Naive thymus-derived CD4-positive, alpha-beta T cell (primary cell): ENCODE measurements at regions of chr14 and their contacts with region 1.

Region 1: DNA sequence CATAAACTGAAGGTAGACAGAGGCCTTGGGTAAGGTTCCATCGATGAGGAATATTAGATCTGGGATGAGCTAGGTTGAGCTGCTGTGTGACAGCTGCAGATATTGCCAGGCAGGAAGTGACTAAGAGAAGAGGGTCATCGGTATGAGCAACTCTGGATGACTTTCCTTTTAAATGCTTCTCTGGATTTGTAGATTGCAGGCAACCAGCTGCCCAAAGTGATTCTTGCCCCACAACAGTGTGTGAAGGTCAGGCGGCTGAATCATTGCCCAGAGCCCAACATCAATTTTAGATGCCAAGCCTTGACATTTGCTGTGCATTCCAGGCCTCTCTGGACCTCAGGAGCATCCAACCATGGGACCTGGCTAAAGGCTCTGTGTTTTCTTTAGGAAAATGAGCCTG is 255.9 kb downstream of the DPF3 start:
- DNase-seq: no peak
- ATAC-seq: no peak
- H3K4me3 ChIP-seq: no peak overlapping the region
- H3K4me3 Mint-ChIP-seq: no peak overlapping the region
- H3K27ac ChIP-seq: no peak overlapping the region
- H3K27ac Mint-ChIP-seq: no peak overlapping the region
- H3K4me1 ChIP-seq: no peaks in the 10 kb centered on the region
- H3K4me1 Mint-ChIP-seq: peaks cover 0 to 6% (median 0%) of the 10 kb centered on the region in 7 donors
- H3K27me3 ChIP-seq: no peaks in the 10 kb centered on the region
- H3K27me3 Mint-ChIP-seq: peaks cover 0 to 40% (median 0%) of the 10 kb centered on the region in 5 donors

Region 2: DNA sequence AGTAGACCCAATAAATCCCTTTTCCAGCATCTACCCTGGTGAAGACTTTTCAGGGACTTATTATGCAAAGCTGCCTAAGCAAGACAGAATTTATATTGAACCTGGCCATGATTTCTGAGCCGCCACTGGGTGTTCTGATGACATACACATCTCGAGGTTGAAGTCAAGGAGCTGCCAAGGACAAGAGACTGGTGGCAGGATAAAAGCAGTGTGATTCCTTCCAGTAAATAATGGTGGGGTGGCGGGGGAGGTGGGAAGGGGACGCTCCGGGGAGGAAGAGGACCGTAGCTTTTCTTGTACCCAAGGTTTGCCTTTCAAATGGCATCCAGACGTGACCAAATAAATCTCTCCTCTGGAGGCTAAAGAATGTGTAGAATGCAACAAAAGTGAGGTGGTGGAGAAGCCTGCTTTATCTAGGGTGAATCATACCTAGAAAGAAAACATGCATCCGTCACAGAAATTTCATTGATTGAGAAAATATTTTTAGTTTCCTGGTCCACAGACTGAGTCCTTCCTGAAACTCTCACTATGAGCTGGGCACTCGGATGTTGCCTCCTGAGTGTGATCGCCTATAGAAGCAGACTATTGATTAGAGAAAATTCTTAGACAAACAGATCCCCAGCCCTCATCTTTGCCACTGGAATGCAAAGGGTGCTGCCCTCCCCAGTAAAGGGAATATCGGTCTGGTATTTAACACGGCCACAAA is 143.6 kb after region 1 on chr14:
- CTCF ChIA-PET with region 1: no interaction called
- POLR2A ChIA-PET with region 1: no interaction called
- intact Hi-C with region 1: loop called in 1 of 2 experiments (anchors 10 kb)
- DNase-seq: no peak
- ATAC-seq: no peak
- H3K4me3 ChIP-seq: no peak overlapping the region
- H3K4me3 Mint-ChIP-seq: no peak overlapping the region
- H3K27ac ChIP-seq: no peak overlapping the region
- H3K27ac Mint-ChIP-seq: no peak overlapping the region
- H3K4me1 ChIP-seq: no peaks in the 10 kb centered on the region
- H3K4me1 Mint-ChIP-seq: peaks cover 0 to 10% (median 6%) of the 10 kb centered on the region in 7 donors
- H3K27me3 ChIP-seq: no peaks in the 10 kb centered on the region
- H3K27me3 Mint-ChIP-seq: no peaks in the 10 kb centered on the region